Breast epithelium (tissue), 4 donors: ENCODE measurements at regions of chr17 and their contacts with region 1.

Region 1: GRCh38 chr17:40062329-40063186 is at the start of gene THRA:
- DNase-seq: peak in 1 of 2 donors; percentile 47
- H3K4me3 ChIP-seq: peak within 1 kb of the TSS; percentile 87 to 100 (median 100)
- H3K27ac ChIP-seq: peak within 1 kb of the TSS; percentile 96 to 98
- H3K4me1 ChIP-seq: peaks cover 8 to 18% of the 10 kb centered on the region in 2 donors
- H3K27me3 ChIP-seq: no peaks in the 10 kb centered on the region
- CTCF ChIP-seq: no peak
- POLR2A ChIP-seq: no peak
- total RNA-seq, gene THRA: 41.6 to 61.0 (median 48.1) TPM

Region 2: GRCh38 chr17:39699818-39700147 is 362.8 kb before region 1 on chr17 and contains the start of gene ERBB2:
- intact Hi-C with region 1: no loop called
- DNase-seq: peak; percentile 85 to 89
- H3K4me3 ChIP-seq: peak within 1 kb of the TSS; percentile 78 to 97 (median 87)
- H3K27ac ChIP-seq: peak within 1 kb of the TSS; percentile 94 to 98
- H3K4me1 ChIP-seq: peaks cover 0 to 19% of the 10 kb centered on the region in 2 donors
- H3K27me3 ChIP-seq: no peaks in the 10 kb centered on the region
- CTCF ChIP-seq: no peak
- POLR2A ChIP-seq: peak; percentile 55
- total RNA-seq, gene ERBB2: 13.1 to 118 (median 59.0) TPM

Region 3: GRCh38 chr17:40026816-40027613 is 35.5 kb before region 1 on chr17:
- intact Hi-C with region 1: no loop called
- DNase-seq: peak; percentile 78 to 85
- H3K4me3 ChIP-seq: peak overlapping the region in 1 of 3 donors; percentile 19
- H3K27ac ChIP-seq: peak overlapping the region; percentile 81 to 92
- H3K4me1 ChIP-seq: peaks cover 11 to 37% of the 10 kb centered on the region in 2 donors
- H3K27me3 ChIP-seq: no peaks in the 10 kb centered on the region
- CTCF ChIP-seq: peak; percentile 79 to 92 (median 87)
- POLR2A ChIP-seq: no peak

Region 4: DNA sequence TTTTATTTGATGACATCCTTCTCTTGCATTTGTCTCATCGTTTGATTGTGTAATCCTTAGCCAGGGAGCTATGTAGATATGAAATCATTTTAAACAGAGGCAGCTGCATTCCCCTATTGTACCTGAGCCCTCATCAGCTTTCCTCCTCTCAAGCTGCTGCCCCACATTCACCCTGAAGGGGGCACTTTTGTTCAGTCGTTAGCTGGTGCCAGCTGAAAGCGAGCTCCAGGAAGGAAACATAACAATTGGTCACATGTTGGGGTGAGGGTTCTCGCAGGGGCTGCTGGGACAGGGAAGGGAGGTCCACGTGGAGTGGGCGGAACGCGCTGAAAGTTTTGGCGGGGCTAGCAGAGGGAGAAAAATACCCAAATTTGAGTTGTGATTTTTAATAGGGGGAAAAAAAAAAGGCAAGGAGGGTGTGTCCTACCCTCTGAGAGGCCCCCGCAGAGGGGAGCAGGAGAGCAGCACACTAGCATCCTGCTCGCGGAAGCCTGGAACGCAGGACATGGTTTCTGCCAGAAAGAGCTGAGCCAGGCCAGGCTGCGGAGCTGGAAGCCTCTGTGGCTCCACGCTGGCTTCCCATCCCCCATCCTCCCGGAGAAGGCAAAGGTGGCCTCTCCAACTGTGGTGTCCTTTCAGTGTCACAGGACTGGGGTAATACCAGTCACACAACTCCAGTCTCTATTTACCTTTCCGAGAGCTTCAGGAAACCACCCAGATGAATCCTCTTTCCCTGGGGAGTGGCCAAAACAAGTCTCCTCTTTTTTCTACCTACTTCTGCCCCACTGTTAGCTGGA is 50.8 kb after region 1 on chr17:
- intact Hi-C with region 1: loop called (anchors 10 kb)
- DNase-seq: peak; percentile 93 to 95
- H3K4me3 ChIP-seq: peak overlapping the region; percentile 39 to 63 (median 50)
- H3K27ac ChIP-seq: peak overlapping the region; percentile 98 to 99
- H3K4me1 ChIP-seq: peaks cover 0 to 51% of the 10 kb centered on the region in 2 donors
- H3K27me3 ChIP-seq: no peaks in the 10 kb centered on the region
- CTCF ChIP-seq: peak; percentile 95 to 98 (median 96)
- POLR2A ChIP-seq: no peak

Region 5: DNA sequence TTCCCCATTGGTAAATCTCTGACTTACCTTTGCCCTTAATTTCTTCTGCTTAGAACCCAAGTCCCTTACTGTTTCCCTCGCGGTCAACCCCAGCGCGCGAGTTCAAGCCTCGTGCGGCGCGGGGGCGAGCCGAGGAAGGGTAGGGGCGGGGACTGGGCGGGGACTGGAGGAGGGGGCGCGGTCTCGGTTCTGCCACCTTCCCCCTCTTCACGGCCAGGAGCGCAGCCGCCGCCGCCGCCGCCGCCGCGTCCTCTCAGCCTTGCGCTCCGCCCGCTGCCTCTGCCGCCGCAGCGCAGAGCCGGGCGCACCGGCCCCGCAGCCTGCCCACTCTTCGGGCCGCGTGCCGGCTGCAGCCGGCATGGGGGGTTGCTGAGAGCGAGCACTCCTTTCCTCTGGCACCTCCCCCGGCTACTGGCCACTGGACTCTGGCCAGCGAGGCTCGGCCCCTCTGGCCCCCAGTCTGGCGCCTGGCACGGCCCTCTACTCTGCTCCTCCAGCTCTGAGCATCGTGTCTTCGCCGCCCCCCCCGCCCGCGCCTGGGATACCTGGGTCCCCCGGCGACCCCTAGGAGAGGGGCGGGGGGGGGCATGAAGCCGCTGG is 114.8 kb after region 1 on chr17 and contains the start of gene RAPGEFL1:
- intact Hi-C with region 1: loop called (anchors 10 kb)
- DNase-seq: peak; percentile 72 to 82
- H3K4me3 ChIP-seq: peak within 1 kb of the TSS; percentile 41 to 68 (median 64)
- H3K27ac ChIP-seq: peak within 1 kb of the TSS; percentile 62 to 69
- H3K4me1 ChIP-seq: peaks cover 0 to 5% of the 10 kb centered on the region in 2 donors
- H3K27me3 ChIP-seq: no peaks in the 10 kb centered on the region
- CTCF ChIP-seq: no peak
- POLR2A ChIP-seq: no peak
- total RNA-seq, gene RAPGEFL1: 3.2 to 10.8 (median 5.0) TPM